Activated CD4-positive, alpha-beta T cell treated with anti-CD3 and anti-CD28 coated beads, Interleukin-2, amount 10 ng/mL, durations not matched to agents 24 days and 14 days (primary cell): ENCODE measurements at regions of chr6 and their contacts with region 1.

Region 1: DNA sequence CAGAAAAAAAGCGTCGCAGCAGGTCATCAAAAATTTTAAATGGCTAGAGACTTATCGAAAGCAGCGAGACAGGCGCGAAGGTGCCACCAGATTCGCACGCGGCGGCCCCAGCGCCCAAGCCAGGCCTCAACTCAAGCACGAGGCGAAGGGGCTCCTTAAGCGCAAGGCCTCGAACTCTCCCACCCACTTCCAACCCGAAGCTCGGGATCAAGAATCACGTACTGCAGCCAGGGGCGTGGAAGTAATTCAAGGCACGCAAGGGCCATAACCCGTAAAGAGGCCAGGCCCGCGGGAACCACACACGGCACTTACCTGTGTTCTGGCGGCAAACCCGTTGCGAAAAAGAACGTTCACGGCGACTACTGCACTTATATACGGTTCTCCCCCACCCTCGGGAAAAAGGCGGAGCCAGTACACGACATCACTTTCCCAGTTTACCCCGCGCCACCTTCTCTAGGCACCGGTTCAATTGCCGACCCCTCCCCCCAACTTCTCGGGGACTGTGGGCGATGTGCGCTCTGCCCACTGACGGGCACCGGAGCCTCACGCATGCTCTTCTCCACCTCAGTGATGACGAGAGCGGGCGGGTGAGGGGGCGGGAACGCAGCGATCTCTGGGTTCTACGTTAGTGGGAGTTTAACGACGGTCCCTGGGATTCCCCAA is at the start of gene EEF1A1:
- DNase-seq: peak; percentile 99
- H3K4me3 Mint-ChIP-seq: peak within 1 kb of the TSS; percentile 97
- H3K27ac Mint-ChIP-seq: peak within 1 kb of the TSS; percentile 100
- H3K4me1 Mint-ChIP-seq: peaks cover 45% of the 10 kb centered on the region
- H3K27me3 Mint-ChIP-seq: peaks cover 10% of the 10 kb centered on the region
- total RNA-seq, gene EEF1A1: 9,514 and 9,634 TPM in 2 replicates

Region 2: DNA sequence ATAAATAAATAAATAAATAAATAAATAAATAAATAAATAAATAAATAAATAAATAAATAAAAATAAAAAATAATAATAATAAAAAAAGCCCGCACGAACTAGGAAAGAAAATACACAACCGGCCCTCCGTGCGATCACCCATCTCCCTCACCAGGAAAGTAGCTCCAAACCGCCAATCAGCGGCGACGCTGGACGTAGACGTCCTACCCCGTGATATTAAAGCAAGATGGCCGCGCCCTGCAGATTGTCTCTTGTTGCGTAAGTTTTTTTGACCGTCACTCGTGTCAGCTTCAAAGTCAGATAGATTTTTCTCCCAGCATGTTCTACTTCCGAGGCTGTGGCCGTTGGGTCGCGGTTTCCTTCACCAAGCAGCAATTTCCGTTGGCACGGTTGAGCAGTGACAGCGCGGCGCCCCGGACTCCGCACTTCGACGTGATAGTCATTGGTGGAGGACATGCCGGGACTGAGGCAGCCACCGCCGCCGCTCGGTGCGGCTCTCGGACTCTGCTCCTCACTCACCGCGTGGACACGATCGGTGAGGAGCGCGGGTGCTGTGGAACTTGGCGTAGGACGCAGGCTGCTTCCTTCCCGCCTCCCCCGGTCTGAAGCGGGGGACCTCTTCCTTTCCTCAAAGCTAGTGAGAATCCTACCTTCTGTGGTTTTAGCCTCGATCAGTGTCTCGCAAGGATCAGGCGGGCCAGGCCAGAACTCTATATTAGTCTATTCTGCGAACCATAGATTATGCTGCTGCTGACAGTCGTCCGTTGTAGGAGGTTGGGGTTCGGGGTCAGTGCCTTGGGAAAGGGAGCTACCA is 59.1 kb before region 1 on chr6 and contains the start of gene MTO1:
- intact Hi-C with region 1: loop called (anchors 2 kb)
- DNase-seq: peak; percentile 93
- H3K4me3 Mint-ChIP-seq: peak within 1 kb of the TSS; percentile 94
- H3K27ac Mint-ChIP-seq: peak within 1 kb of the TSS; percentile 98
- H3K4me1 Mint-ChIP-seq: peaks cover 45% of the 10 kb centered on the region
- H3K27me3 Mint-ChIP-seq: no peaks in the 10 kb centered on the region
- total RNA-seq, gene MTO1: 35.5 and 35.7 TPM in 2 replicates

Region 3: GRCh38 chr6:73585566-73586415 is 65.0 kb after region 1 on chr6:
- intact Hi-C with region 1: loop called (anchors 1 kb)
- DNase-seq: peak; percentile 84
- H3K4me3 Mint-ChIP-seq: peak overlapping the region; percentile 91
- H3K27ac Mint-ChIP-seq: peak overlapping the region; percentile 98
- H3K4me1 Mint-ChIP-seq: peaks cover 22% of the 10 kb centered on the region
- H3K27me3 Mint-ChIP-seq: no peaks in the 10 kb centered on the region

Region 4: DNA sequence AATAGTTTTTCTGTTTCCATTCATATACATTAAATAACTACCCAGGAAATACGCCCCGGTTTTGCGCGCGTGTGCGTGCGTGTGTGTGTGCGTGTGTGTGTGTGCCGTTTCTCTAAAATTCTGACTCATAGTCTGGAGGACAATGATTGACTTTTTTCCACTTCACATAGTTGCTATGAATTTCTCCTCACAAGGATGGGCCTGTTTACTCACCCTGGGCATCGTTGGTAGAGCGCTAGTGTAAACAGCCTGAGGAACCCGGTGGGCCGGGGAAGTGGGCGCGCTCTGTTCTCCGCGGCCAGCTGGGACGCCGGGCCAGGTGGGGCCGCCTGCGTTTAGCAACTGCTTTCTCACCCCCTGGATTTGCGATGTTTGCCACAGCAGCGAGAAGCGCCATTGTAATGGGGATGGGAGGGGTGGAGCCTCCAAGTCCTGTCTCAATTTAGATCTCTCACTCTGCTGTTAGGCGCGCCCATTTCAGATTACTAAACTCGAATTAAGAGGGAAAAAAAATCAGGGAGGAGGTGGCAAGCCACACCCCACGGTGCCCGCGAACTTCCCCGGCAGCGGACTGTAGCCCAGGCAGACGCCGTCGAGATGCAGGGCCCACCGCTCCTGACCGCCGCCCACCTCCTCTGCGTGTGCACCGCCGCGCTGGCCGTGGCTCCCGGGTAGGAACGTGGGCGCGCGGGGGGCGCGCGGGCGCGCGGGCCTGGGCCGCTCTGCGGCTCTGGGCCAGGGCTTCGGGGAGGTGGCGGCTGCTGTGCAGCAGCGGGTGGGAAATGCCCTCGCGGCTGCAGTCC is 175.0 kb after region 1 on chr6 and contains the start of gene CD109:
- intact Hi-C with region 1: loop called (anchors 1 kb)
- DNase-seq: peak; percentile 90
- H3K4me3 Mint-ChIP-seq: peak within 1 kb of the TSS; percentile 90
- H3K27ac Mint-ChIP-seq: peak within 1 kb of the TSS; percentile 98
- H3K4me1 Mint-ChIP-seq: peaks cover 46% of the 10 kb centered on the region
- H3K27me3 Mint-ChIP-seq: no peaks in the 10 kb centered on the region
- total RNA-seq, gene CD109: 23.6 and 24.2 TPM in 2 replicates

Region 5: GRCh38 chr6:75243333-75244062 is 1722.7 kb after region 1 on chr6 and contains the start of gene COX7A2:
- intact Hi-C with region 1: loop called (anchors 2 kb)
- DNase-seq: peak; percentile 96
- H3K4me3 Mint-ChIP-seq: peak within 1 kb of the TSS; percentile 94
- H3K27ac Mint-ChIP-seq: peak within 1 kb of the TSS; percentile 95
- H3K4me1 Mint-ChIP-seq: peaks cover 24% of the 10 kb centered on the region
- H3K27me3 Mint-ChIP-seq: peaks cover 15% of the 10 kb centered on the region
- total RNA-seq, gene COX7A2: 490 and 538 TPM in 2 replicates